ENCODE measurements at regions of chr6 and their contacts with region 1.

Region 1: GRCh38 chr6:36780442-36781177 is 58.6 kb downstream of the CPNE5 start:
- DNase-seq: peak; percentile 28 to 83 (median 79)
- H3K4me3 ChIP-seq: no peak overlapping the region
- H3K27ac ChIP-seq: no peak overlapping the region
- H3K4me1 ChIP-seq: peaks cover 4 to 28% (median 10%) of the 10 kb centered on the region in 4 experiments
- H3K27me3 ChIP-seq: peaks cover 0 to 5% (median 0%) of the 10 kb centered on the region in 5 experiments

Region 2: GRCh38 chr6:36793913-36794712 is 13.5 kb after region 1 on chr6:
- CTCF ChIA-PET with region 1: interaction called, 11 read pairs
- POLR2A ChIA-PET with region 1: no interaction called
- DNase-seq: no peak
- H3K4me3 ChIP-seq: no peak overlapping the region
- H3K27ac ChIP-seq: no peak overlapping the region
- H3K4me1 ChIP-seq: no peaks in the 10 kb centered on the region
- H3K27me3 ChIP-seq: peaks cover 0 to 7% (median 1%) of the 10 kb centered on the region in 5 experiments

Measured in common myeloid progenitor, CD34-positive (primary cell).